Left colon (tissue), 2 donors: ENCODE measurements at regions of chr12 and their contacts with region 1.

Region 1: GRCh38 chr12:1916371-1917171 is 1.9 kb downstream of the CACNA2D4 start:
- DNase-seq: no peak
- ATAC-seq: no peak

Region 2: DNA sequence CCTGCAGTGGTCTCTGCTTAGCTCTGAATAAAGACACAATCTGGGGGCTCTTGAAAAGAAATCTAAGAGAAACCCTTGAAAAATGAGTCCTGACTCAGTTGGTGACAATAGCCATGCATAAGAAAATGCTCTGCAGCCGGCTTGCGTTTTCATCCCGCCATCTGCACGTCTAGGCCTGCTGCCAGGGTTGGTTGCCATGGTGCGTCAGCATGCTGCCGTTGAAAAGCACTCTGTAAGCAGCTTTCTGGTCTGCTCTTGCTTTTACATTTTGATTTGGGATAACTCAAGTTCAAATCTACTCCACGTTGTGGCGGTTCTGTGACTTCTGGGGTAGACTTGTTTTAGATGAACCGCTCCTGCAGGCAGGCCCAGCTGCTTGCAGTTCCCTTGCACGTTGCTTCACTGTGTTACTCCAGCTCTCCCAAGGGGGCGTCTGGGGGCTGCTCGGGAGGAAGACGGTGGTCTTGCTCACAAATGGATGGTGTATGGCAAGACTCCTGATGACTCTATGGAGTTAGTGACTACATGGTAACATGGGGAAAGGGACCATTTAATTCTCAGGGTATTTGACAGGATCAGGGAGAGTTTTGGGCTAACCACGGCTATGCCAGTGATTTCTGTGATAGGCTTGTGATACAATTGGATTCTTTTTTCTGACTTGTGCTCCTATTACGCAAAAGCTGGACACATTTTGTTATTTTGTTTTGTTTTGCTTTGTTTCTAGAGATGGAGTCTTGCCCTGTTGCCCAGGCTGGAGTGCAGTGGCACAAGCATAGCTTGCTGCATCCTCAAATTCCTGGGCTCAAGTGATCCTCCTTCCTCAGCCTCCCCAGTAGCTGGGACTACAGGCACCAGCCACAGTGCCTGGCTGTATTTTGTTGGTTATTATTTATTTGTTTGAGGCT is 271.8 kb before region 1 on chr12:
- intact Hi-C with region 1: loop called in 1 of 2 experiments (anchors 10 kb)
- DNase-seq: peak; percentile 60 to 69
- ATAC-seq: peak; percentile 49

Region 3: GRCh38 chr12:1820191-1820895 is 96.2 kb before region 1 on chr12 and contains the start of gene LRTM2:
- intact Hi-C with region 1: loop called in 1 of 2 experiments (anchors 10 kb)
- DNase-seq: no peak
- ATAC-seq: no peak
- total RNA-seq, gene LRTM2: not detected